Right ventricle myocardium inferior (tissue), 1 donor: ENCODE measurements at regions of chr9 and their contacts with region 1.

Region 1: DNA sequence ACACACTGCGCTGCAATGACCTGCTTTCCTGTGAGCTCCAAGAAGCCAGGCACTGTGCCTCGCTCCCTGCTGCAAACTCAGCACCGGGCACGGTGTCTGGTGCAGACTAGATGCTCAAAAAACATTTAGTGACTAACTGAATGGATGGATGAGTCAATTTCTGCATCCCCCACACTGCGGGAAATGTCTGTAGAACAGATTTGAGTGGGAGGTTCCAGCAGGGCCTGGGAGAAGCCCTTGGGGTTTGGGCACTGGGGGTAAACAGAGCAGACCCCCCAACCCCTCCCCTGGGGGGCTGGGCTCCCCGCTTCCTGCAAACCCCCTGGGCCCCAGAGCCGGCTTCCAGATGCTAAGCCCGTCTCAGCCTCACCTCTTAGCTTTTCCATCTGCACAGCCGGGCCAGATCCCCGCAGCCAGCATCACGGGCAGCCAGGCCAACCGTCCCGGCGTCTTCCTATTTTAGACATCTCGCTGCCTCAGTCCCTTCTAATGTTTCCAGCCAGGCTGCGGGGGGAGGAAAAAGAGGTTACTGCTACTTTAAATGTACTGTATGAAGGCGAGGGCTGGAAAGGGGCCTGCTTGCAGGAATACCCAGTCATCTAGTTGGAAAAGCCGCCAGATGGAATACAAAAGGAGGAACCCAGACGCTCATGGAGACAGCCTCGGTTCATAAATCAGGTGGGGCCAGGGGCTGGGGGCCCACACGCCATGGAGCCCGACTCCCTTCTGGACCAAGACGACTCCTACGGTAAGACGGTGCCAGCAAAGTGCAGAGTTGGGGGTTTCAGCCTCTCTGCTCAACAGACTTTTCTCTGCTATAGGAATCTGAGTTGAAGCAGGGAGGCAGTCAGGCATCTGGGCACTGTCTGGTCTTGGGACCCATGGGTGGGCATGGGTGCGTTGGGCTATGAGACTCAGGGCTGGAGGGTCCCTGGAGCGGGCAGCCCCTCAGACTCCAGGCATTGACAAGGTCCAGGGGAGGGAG is 67.1 kb upstream of the GGTA1 start:
- DNase-seq: peak; percentile 73
- ATAC-seq: peak; percentile 59

Region 2: DNA sequence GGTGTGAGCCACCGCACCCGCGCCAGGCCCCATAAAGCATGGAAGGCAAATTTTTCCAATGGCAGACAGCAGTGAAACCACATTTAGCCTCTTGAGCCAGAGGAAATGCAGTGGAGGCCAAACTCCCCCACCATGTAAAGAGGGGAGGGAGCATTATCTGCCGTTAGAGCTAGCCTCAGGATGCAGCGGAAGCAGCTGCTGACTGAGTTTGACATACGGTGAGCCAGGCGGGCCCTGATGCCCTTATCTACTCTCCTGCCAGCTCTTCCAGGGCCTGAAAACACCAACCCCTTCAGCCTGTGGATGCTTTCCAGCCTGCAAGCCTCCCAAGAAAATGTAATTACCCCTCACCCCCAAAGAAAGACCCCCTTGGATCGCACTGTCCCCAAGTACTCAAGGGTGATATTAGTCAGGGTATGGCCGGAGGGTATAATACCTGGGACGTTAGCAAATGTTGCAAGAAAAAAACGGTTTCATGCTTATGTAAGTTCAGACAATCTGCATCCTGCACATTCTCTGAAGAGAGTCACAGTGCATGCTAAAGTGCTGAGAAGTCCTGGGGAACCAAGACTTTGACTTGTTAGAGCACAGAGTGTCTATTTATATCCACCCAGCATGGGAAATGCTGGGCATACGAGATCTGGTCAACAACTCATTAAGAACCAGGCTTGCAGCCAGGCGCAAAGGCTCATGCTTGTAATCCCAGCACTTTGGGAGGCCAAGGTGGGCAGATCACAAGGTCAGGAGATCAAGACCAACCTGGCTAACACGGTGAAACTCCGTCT is 55.8 kb before region 1 on chr9:
- intact Hi-C with region 1: no loop called
- DNase-seq: no peak
- ATAC-seq: peak; percentile 81

Region 3: DNA sequence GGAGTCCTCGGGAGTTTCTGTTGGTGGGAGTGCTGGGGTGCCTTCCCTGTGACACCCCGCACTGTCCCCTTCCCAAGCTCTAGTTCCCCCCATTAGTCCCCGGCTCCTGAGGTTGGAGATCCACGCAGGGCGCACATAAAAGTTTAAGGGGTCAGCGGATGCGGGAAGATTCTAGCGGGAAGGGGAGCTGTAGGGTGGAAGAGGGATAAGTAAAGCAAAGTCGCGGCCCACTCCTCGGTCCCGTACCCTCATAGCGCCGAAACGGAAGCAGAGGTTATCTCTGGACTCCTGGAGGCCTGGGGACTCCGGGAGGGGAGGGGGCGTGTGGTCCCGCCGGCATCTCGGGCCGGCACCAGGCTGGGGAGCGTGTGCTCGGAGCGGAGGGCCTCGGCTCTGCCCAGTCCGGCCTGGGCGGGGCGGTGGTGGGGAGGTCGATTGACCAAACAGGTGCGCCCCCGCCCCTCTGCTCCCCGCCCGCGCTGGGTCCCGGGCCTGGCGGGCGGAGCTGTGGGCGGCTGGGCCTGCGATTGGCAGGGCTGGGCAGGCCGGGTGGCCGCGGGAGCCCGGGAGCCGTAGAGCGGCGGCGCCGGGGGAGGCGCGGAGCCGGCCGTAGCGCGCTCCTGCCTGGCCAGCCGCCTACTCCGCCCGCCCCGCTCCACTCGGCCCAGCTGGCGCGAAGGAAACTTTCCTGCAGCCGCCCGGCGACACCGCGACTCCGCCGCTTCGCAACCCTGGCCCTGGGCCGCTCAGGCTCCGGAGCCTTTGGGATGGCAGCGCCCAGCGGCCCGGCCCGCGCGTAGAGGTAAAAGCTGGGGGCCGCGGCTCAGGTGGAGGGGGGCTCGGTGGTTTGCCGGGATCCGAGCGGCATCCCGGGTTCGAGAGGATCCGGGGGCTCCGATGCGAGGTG is 32.4 kb after region 1 on chr9:
- intact Hi-C with region 1: loop called (anchors 1 kb)
- DNase-seq: peak; percentile 86
- ATAC-seq: peak; percentile 86

Region 4: GRCh38 chr9:121640076-121640475 is 73.3 kb after region 1 on chr9:
- intact Hi-C with region 1: no loop called
- DNase-seq: no peak
- ATAC-seq: peak; percentile 58